Heart right ventricle (tissue), 16 donors: ENCODE measurements at regions of chr12 and their contacts with region 1.

Region 1: GRCh38 chr12:26651566-26652188 is 181.3 kb downstream of the ITPR2 start:
- DNase-seq: peak in 1 of 2 donors; percentile 49
- ATAC-seq: peak in 7 of 8 donors; percentile 38 to 78 (median 62)
- H3K4me3 ChIP-seq: no peak overlapping the region
- H3K27ac ChIP-seq: no peak overlapping the region
- H3K4me1 ChIP-seq: peaks cover 0 to 12% (median 0%) of the 10 kb centered on the region in 9 donors
- H3K27me3 ChIP-seq: no peaks in the 10 kb centered on the region
- CTCF ChIP-seq: peak; percentile 62 to 87 (median 78)

Region 2: DNA sequence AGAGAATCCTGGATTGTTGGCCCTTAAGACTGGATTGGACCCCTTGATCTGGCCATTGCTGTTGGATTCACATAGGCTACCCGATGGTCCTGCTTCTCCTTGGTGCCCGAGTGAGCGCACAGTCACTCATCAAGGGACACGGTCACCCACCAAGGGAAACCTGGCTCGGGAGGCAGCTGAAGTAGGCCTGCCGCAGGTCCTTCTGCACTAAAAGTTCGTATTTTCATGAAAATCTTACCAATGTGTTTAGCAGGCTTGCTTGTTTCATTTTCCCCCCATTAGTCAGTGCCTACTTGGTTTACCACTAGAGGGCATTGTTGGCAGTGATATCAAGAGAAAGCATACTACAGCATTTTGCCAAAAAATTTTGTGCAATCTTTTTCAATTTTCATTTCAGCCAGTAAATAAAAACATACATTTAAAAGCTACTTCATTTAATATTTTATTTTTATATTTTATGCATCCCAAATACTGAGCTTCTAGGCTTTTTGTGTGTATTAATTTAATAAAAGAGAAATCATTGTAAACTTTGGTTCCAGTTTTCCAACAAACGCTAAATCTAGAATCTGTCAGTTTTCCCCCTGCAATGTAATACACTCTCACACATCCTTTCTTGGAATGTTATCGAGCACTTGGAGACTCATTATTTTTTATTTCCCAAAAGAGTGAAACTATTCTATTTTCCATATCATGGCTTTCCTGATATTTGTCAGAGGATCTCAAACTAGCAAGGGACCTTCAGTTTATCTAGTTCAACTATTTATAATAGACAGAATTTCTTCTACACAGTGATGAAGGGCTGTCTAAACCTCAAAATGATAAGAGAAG is 1215.3 kb before region 1 on chr12:
- intact Hi-C with region 1: loop called in 1 of 10 experiments (anchors 10 kb)
- DNase-seq: peak in 1 of 2 donors; percentile 40
- ATAC-seq: peak in 6 of 8 donors; percentile 52 to 74 (median 56)
- H3K4me3 ChIP-seq: peak overlapping the region in 6 of 10 donors; percentile 19 to 50 (median 40)
- H3K27ac ChIP-seq: no peak overlapping the region
- H3K4me1 ChIP-seq: peaks cover 0 to 5% (median 0%) of the 10 kb centered on the region in 9 donors
- H3K27me3 ChIP-seq: no peaks in the 10 kb centered on the region
- CTCF ChIP-seq: peak; percentile 56 to 92 (median 83)

Region 3: DNA sequence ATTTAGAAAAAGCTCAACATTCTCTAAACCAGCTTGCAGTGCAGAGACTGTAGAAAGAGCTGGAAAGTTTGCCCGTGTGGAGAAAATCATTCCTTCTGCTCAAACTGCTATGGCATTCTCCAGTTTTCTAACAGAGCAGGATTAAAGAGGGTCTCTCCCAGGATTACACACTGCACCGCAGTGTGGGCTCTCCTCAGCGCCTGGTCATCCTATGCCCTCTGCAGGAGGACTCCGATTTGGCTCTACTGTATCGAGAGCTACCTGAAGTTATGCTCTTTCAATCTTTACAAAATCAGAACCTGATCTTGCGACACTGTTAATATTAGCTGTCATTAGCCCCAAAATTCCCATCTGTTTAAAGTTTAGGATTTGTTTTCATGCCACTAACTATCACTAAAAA is 559.9 kb before region 1 on chr12:
- intact Hi-C with region 1: loop called in 9 of 10 experiments (anchors 1 to 10 kb)
- DNase-seq: no peak
- ATAC-seq: peak in 1 of 8 donors; percentile 44
- H3K4me3 ChIP-seq: no peak overlapping the region
- H3K27ac ChIP-seq: no peak overlapping the region
- H3K4me1 ChIP-seq: no peaks in the 10 kb centered on the region
- H3K27me3 ChIP-seq: no peaks in the 10 kb centered on the region
- CTCF ChIP-seq: peak in 4 of 9 donors; percentile 18 to 42 (median 30)

Region 4: DNA sequence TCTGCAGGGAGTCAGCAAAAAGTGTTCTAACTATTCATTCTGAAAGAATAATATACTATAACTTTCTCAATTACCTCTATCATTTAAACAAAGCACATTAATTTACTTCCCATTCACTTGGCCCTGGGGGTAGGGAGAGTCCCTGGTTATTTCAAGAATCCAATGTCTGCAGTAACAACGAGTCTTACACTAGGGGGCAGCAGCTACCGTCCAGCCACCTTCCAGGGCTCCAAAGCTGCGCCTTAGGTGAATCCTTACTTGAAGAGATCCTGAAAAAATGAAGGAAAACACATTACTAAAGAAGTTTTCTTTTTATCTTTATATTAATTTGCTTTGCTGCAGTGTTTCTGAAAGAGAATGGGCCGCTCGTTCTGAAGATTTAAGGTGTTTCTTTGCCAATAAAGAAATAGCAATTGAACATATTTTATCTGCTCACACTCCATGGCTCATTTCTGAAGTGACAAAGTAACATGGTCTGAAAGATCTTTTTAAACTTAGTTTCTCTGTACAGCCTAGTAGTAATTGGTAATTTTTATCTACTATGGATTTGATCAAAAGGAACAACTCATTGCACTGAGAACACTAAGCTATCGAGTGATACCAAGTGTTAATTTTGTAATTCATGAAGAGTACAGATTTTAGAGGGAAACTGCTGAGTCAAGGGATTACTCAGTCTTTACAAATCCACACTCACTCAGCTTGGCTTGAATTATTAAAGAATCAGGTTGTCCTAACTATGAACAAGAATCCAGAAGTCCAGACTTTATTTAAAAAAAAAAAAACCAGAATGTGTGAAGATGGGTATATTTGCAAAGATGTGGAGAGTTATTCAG is 554.4 kb before region 1 on chr12:
- intact Hi-C with region 1: loop called in 9 of 10 experiments (anchors 1 to 10 kb)
- DNase-seq: peak; percentile 59 to 78
- ATAC-seq: peak; percentile 89 to 98 (median 94)
- H3K4me3 ChIP-seq: no peak overlapping the region
- H3K27ac ChIP-seq: no peak overlapping the region
- H3K4me1 ChIP-seq: peaks cover 0 to 7% (median 0%) of the 10 kb centered on the region in 9 donors
- H3K27me3 ChIP-seq: no peaks in the 10 kb centered on the region
- CTCF ChIP-seq: peak; percentile 85 to 97 (median 95)

Region 5: DNA sequence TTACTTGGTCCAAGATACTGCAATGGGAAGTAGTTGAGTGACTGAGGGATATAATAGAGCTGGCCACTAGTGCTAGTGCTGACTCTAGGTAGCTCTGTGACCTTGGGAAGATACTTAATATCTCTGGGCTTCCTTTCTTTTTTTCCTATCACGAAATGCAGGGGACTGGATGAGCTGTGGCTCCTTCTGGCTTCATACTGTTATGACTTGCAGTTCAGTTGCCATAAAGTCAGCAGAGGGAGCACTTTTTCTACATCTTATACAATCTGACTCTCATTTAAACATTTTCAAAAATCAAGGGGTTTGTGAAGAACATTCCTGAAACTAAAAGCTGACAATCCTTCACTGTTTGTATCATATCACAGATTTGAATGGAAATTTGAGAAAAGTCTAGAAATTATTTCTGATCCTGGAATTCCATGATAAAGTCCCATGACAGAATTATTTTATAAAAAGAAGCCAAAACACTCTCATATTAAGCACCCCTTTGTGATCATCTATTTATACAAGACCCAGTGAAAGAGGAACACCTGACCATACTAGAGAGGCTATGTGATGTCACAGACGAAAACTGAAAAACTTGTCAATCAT is 532.2 kb before region 1 on chr12:
- intact Hi-C with region 1: loop called in 2 of 10 experiments (anchors 5 kb)
- DNase-seq: no peak
- ATAC-seq: peak in 3 of 8 donors; percentile 22 to 34 (median 31)
- H3K4me3 ChIP-seq: peak overlapping the region in 1 of 10 donors; percentile 61
- H3K27ac ChIP-seq: peak overlapping the region in 7 of 10 donors; percentile 18 to 98 (median 97)
- H3K4me1 ChIP-seq: peaks cover 3 to 65% (median 31%) of the 10 kb centered on the region in 9 donors
- H3K27me3 ChIP-seq: peaks cover 0 to 55% (median 0%) of the 10 kb centered on the region in 7 donors
- CTCF ChIP-seq: peak; percentile 3 to 77 (median 52)

Region 6: GRCh38 chr12:26434299-26435068 is 217.2 kb before region 1 on chr12:
- intact Hi-C with region 1: loop called in 6 of 10 experiments (anchors 5 to 10 kb)
- DNase-seq: no peak
- ATAC-seq: peak in 5 of 8 donors; percentile 55 to 70 (median 56)
- H3K4me3 ChIP-seq: no peak overlapping the region
- H3K27ac ChIP-seq: no peak overlapping the region
- H3K4me1 ChIP-seq: no peaks in the 10 kb centered on the region
- H3K27me3 ChIP-seq: no peaks in the 10 kb centered on the region
- CTCF ChIP-seq: peak; percentile 16 to 75 (median 69)